PC-3 (cell line): ENCODE measurements at regions of chr3 and their contacts with region 1.

Region 1: GRCh38 chr3:99084826-99085225 is 183.3 kb upstream of the DCBLD2 start:
- DNase-seq: peak; percentile 95
- ATAC-seq: peak; percentile 89
- H3K4me3 ChIP-seq: peak overlapping the region; percentile 53
- H3K27ac ChIP-seq: peak overlapping the region; percentile 92
- H3K4me1 ChIP-seq: peaks cover 49% of the 10 kb centered on the region
- H3K27me3 ChIP-seq: no peaks in the 10 kb centered on the region
- CTCF ChIP-seq: no peak

Region 2: DNA sequence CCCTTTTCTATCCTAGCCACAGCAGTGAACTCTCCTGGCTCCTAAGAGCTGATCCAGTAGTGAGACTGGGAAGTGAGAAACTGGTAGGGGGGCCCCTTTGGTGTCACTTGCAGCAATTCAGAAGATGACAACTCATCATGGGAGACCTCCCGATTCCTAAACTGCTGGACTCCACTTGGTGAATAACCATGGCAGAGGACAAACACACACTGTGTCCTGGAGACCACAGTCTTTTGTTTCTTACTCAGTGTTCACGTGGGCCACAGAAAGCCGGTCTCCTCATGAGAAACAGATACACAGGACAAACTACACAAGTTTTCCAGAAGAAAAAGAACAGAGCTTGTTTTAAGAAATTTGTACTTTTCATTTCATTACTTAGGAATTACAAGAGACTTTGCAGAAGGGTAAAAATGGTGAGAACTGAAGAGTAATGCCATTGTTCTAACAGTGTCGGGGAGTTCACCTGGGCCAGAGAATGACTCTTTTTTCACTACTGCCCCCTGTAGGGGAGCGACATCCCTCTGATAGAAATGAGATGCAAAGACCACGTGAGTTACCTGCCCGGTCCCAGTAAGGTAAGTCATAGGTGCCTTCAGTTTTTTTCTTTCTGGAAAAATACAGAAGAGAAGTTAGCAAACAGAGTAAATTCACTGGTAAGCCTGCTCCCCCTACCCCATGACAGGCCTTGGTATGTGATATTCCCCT is 283.6 kb before region 1 on chr3:
- CTCF ChIA-PET with region 1: no interaction called
- POLR2A ChIA-PET with region 1: no interaction called
- intact Hi-C with region 1: no loop called
- DNase-seq: no peak
- ATAC-seq: peak; percentile 40; the same call in 1 of the 2 replicates
- H3K4me3 ChIP-seq: no peak overlapping the region
- H3K27ac ChIP-seq: no peak overlapping the region
- H3K4me1 ChIP-seq: no peaks in the 10 kb centered on the region
- H3K27me3 ChIP-seq: no peaks in the 10 kb centered on the region
- CTCF ChIP-seq: peak; percentile 53

Region 3: GRCh38 chr3:99108508-99108907 is 23.7 kb after region 1 on chr3:
- CTCF ChIA-PET with region 1: no interaction called
- POLR2A ChIA-PET with region 1: interaction called, 7 read pairs
- intact Hi-C with region 1: loop called (anchors 1 kb)
- DNase-seq: peak; percentile 95
- ATAC-seq: peak; percentile 94
- H3K4me3 ChIP-seq: no peak overlapping the region
- H3K27ac ChIP-seq: peak overlapping the region; percentile 17
- H3K4me1 ChIP-seq: peaks cover 18% of the 10 kb centered on the region
- H3K27me3 ChIP-seq: no peaks in the 10 kb centered on the region
- CTCF ChIP-seq: no peak

Region 4: DNA sequence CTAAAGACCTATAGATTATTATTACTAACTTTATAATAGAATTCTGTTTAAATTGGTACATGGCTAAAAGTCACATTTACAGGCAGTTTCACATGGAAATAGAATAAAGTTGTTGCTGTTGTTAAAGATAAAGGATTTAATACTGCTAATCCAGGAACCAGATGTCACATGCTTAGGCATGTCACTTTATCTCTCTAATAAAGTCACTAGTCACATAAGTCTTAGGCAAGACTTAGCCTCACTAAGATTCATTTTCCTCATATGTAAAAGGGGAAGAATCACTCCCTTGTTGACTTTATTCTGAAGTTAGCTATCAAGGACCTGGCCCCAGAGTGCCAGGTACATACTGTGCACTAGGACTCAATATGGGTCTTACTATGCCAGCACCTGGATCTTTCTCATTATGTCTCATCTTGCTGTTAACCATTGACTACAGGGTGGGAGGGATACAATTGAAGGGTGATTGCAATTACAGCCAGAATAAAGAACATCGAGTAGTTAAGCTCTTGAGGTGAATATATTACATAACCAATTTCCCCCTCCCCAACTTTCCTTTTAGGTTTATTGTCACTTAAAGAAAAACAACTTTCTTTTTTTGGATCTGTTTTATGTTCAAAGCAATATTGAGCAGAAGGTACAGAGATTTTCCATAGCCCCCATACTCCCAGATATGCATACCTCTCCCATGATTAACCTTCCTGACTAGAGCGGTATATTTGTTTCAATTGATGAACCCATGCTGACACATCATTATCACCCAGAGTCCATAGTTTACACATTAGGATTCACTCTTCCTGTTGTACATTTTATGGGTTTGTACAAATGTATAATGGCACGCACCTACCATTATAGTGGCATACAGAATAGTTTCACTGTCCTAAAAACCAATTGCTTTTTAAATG is 1353.1 kb after region 1 on chr3:
- CTCF ChIA-PET with region 1: no interaction called
- POLR2A ChIA-PET with region 1: interaction called, 13 read pairs
- intact Hi-C with region 1: no loop called
- DNase-seq: peak; percentile 86
- ATAC-seq: peak; percentile 72
- H3K4me3 ChIP-seq: peak overlapping the region; percentile 22; the same call in 1 of the 2 replicates
- H3K27ac ChIP-seq: peak overlapping the region; percentile 96
- H3K4me1 ChIP-seq: peaks cover 47% of the 10 kb centered on the region
- H3K27me3 ChIP-seq: no peaks in the 10 kb centered on the region
- CTCF ChIP-seq: no peak